GM13976 (cell line): ENCODE measurements at regions of chr9 and their contacts with region 1.

Region 1: GRCh38 chr9:105881654-105882349 is 187.5 kb downstream of the TMEM38B start:
- DNase-seq: peak; percentile 62
- CTCF ChIP-seq: peak; percentile 91

Region 2: DNA sequence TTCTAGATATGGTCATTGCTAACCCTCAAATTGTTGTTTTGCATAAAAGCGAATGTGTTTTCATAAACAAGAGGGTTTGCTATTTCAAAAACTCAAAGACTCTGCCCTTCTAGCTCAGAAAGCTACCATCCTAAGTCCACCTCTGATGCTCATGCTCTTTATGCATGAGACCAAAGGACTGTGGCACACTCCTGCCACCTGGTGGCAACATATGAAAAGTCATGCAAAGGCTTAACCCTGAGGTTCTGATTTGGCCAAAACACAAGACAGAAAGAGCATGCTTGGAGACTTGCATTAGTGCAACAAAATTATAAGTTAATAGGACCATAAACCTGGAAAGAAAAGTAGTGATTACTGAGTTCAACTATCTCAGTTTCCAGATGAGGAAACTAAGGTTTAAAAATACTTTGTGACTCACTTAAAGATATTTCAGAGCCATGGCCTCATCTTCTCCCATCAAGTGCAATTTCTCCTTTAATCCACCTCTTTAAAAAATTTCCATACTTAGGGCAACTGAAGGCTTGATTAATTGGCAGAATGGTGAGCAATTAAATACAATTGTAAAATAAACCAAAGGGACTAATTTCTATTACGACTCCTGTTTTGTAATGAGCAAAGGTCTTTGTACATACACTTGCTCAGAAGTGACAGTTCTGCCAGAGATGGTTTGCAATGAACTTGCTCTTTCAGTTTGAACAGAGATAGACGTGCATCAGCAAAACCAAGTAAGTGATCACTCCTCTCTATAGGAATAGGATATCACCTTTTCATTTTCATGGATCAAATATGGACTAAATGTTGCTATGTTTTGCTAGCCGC is 1290.6 kb after region 1 on chr9:
- in situ Hi-C with region 1: loop called (anchors 25 kb)
- DNase-seq: peak; percentile 64
- CTCF ChIP-seq: peak; percentile 80